ENCODE measurements at regions of chr5 and their contacts with region 1.

Region 1: DNA sequence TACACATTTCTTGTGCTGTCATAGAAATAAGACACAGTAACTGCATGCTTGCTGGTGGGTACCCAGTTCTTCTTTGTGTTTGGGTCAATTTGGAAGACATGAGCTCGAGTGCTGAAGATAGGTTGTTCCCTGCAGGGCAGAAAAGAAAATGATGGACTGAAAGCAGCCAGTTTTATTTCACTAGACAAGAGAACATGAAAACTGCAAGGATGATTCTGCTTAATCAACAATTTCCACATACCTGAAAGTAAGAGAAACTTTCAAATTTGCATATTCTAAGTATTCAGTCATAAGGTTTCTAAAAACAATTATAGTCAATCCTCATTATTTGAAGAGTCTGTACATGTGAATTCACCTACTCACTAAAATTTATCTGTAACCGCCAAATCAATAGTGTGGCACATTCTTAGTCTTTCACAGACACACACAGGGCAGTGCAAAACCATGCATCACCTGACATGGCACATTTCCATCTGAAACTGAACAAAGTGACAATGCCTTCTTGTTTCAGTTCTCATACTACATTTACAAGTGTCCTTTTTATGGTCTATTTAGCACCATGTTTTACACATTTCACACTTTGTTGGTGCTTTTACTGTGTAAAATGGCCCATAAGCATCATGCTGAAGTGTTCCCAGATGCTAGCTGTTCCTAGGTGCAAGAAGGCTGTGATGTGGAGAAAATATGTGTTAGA is 56.9 kb downstream of the HOMER1 start:
- DNase-seq: no peak
- ATAC-seq: no peak
- H3K4me3 ChIP-seq: no peak overlapping the region
- H3K27ac ChIP-seq: no peak overlapping the region
- H3K4me1 ChIP-seq: no peaks in the 10 kb centered on the region
- H3K27me3 ChIP-seq: no peaks in the 10 kb centered on the region
- CTCF ChIP-seq: no peak
- POLR2A ChIP-seq: no peak
- RAD21 ChIP-seq: no peak

Region 2: GRCh38 chr5:78920604-78921003 is 536.4 kb before region 1 on chr5:
- CTCF ChIA-PET with region 1: no interaction called
- POLR2A ChIA-PET with region 1: no interaction called
- RAD21 ChIA-PET with region 1: no interaction called
- intact Hi-C with region 1: no loop called
- DNase-seq: no peak
- ATAC-seq: peak; percentile 67
- H3K4me3 ChIP-seq: no peak overlapping the region
- H3K27ac ChIP-seq: no peak overlapping the region
- H3K4me1 ChIP-seq: no peaks in the 10 kb centered on the region
- H3K27me3 ChIP-seq: no peaks in the 10 kb centered on the region
- CTCF ChIP-seq: no peak
- POLR2A ChIP-seq: no peak
- RAD21 ChIP-seq: peak; percentile 29; the same call in 1 of the 2 replicates

Region 3: DNA sequence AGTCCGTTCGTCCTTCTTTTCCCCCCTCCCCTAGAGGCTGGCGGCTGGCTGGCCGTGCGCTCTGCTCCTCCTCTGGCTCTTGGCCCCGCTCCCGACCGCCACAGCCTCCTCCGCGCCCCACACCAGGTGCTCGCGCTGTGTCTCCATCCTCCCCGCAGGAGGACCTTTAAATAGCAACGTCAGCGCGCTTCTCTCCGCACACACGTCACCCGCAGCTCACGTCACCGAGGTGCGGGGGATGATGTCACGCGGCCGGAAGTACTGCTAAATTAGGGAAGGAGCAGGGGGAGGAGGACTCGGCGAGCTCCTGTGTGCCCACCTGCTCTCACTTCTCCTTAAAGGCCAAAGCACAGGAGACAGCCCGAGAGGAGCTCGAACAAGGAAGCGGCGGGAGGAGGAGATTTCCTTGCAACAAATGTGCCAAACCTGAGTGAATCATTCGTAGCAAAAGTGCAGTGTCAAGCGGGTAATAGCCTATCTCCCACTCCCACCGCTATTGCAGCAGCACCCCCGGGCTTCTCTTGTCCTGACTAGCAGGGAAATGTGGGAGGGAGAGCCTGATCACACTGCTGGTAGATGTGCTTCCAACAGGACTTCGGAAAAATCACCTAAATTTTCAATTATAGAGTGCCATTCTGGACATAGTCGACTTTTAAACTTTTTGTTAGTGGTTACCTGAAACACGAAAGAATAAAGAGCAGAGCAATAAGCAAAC is 57.5 kb after region 1 on chr5:
- CTCF ChIA-PET with region 1: no interaction called
- POLR2A ChIA-PET with region 1: no interaction called
- RAD21 ChIA-PET with region 1: no interaction called
- intact Hi-C with region 1: loop called (anchors 10 kb)
- DNase-seq: peak; percentile 91
- ATAC-seq: peak; percentile 82
- H3K4me3 ChIP-seq: peak overlapping the region; percentile 53 to 69
- H3K27ac ChIP-seq: peak overlapping the region; percentile 94
- H3K4me1 ChIP-seq: peaks cover 12 to 25% of the 10 kb centered on the region in 2 experiments
- H3K27me3 ChIP-seq: no peaks in the 10 kb centered on the region
- CTCF ChIP-seq: no peak
- POLR2A ChIP-seq: peak; percentile 91
- RAD21 ChIP-seq: no peak

Measured in HCT116 (cell line).